ENCODE measurements at regions of chr6 and their contacts with region 1.

Region 1: DNA sequence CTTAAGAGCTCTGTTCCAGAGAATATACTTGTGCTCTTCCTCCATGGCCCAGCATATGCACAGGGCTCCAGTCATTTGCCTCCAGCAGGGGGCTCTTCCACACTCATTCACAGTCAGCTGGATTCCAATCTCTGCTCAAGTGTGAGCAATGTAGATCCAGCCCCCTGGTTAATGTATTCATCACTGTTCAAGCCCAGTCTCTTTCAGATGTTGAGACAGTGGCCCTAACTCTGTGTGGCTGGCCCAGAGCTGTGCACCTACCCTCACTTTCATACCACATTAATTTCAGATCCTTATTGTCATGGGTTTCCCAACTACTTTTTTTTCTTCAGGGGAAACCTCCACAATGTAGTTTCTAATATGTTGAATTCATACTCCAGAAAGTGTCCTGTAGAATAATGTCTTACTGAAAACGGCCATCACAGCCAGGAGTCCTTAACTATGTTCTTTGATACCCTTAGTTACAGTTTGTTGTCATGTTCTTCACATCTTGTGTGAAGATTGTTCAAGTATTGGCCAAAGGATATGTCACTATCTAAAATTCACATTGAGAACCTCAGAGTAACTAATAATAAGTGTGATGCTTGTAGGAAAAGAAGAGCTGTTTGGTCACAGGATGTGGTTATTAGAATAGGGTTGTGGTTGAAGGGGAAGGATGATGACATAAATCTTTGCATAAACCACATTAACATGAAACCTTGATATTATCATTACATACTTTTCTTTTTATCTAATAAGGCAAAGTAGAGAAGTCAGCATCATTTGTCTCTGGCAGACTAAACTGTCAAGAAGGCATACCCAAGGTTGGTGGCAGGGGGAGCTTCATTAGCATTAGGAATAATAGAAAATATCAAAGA is 14.4 kb upstream of the HLA-DQA1 start:
- DNase-seq: no peak
- H3K4me3 ChIP-seq: no peak overlapping the region
- H3K27ac ChIP-seq: no peak overlapping the region
- H3K4me1 ChIP-seq: no peaks in the 10 kb centered on the region
- H3K27me3 ChIP-seq: no peaks in the 10 kb centered on the region
- CTCF ChIP-seq: peak in 1 of 2 donors; percentile 14
- POLR2A ChIP-seq: no peak

Region 2: DNA sequence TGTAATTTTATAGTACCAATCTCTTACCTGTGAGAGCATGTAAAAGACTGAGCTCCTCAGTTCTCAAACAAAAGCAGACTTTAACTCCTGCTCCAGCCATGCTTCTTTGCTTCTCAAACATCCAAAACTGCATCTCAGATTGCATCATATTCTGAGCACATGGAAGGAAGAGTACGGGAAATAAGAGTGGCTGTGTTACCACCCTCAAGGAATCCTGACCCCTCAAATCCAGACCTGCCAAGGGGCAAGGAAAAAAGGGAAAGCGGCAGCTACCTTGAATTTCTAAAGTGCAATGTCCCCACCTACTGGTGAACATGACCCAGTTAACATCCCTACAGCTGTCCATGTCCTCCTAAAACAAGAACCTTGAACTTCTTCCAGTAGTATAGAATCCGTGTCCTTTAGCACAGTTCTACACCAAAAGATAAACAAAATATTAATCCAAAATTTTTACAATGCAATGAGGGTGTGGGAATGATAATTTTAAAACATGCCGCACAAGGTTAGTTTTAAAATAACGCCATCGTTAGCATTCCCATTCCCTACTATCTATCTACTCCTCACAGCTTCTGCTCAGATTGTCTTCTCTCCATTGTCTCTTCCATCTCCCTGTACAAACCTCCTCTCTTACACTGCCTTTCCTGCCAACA is 77.7 kb after region 1 on chr6:
- CTCF ChIA-PET with region 1: interaction called, 25 read pairs
- POLR2A ChIA-PET with region 1: no interaction called
- dilution Hi-C with region 1: no loop called
- intact Hi-C with region 1: loop called (anchors 2 kb)
- DNase-seq: peak; percentile 67
- H3K4me3 ChIP-seq: no peak overlapping the region
- H3K27ac ChIP-seq: no peak overlapping the region
- H3K4me1 ChIP-seq: peaks cover 6% of the 10 kb centered on the region
- H3K27me3 ChIP-seq: peaks cover 15 to 40% of the 10 kb centered on the region in 2 experiments
- CTCF ChIP-seq: peak; percentile 41 to 64
- POLR2A ChIP-seq: no peak

Region 3: GRCh38 chr6:32785781-32786533 is 163.2 kb after region 1 on chr6:
- CTCF ChIA-PET with region 1: interaction called, 12 read pairs
- POLR2A ChIA-PET with region 1: no interaction called
- dilution Hi-C with region 1: no loop called
- intact Hi-C with region 1: loop called (anchors 1 kb)
- DNase-seq: peak; percentile 58
- H3K4me3 ChIP-seq: no peak overlapping the region
- H3K27ac ChIP-seq: no peak overlapping the region
- H3K4me1 ChIP-seq: no peaks in the 10 kb centered on the region
- H3K27me3 ChIP-seq: peaks cover 8 to 50% of the 10 kb centered on the region in 2 experiments
- CTCF ChIP-seq: peak; percentile 49 to 51
- POLR2A ChIP-seq: no peak